ENCODE measurements at regions of chr17 and their contacts with region 1.

Region 1: GRCh38 chr17:58531661-58532554 is 17.5 kb upstream of the MTMR4 start:
- DNase-seq: no peak
- ATAC-seq: peak; percentile 77
- H3K4me3 ChIP-seq: peak overlapping the region; percentile 35 to 68 (median 48); a peak in 5 of 6 replicates
- H3K27ac ChIP-seq: no peak overlapping the region
- H3K4me1 ChIP-seq: peaks cover 65% of the 10 kb centered on the region
- H3K27me3 ChIP-seq: peaks cover 9 to 53% of the 10 kb centered on the region in 2 experiments; a peak in 3 of 5 replicates
- CTCF ChIP-seq: no peak
- EP300 ChIP-seq: no peak
- POLR2A ChIP-seq: no peak
- RAD21 ChIP-seq: no peak; the same call in 1 of the 2 replicates

Region 2: GRCh38 chr17:58402047-58402446 is 129.9 kb before region 1 on chr17:
- CTCF ChIA-PET with region 1: no interaction called
- POLR2A ChIA-PET with region 1: no interaction called
- in situ Hi-C with region 1: no loop called
- intact Hi-C with region 1: no loop called
- DNase-seq: no peak
- ATAC-seq: no peak
- H3K4me3 ChIP-seq: no peak overlapping the region
- H3K27ac ChIP-seq: peak overlapping the region; percentile 22
- H3K4me1 ChIP-seq: peaks cover 100% of the 10 kb centered on the region
- H3K27me3 ChIP-seq: no peaks in the 10 kb centered on the region
- CTCF ChIP-seq: no peak
- EP300 ChIP-seq: no peak
- POLR2A ChIP-seq: no peak
- RAD21 ChIP-seq: no peak

Region 3: GRCh38 chr17:58577642-58578091 is 45.8 kb after region 1 on chr17:
- CTCF ChIA-PET with region 1: interaction called, 3 read pairs
- POLR2A ChIA-PET with region 1: interaction called, 3 read pairs
- in situ Hi-C with region 1: no loop called
- intact Hi-C with region 1: loop called (anchors 2 kb)
- DNase-seq: peak; percentile 52
- ATAC-seq: peak; percentile 35; the same call in 2 of the 3 replicates
- H3K4me3 ChIP-seq: no peak overlapping the region
- H3K27ac ChIP-seq: no peak overlapping the region
- H3K4me1 ChIP-seq: peaks cover 39% of the 10 kb centered on the region
- H3K27me3 ChIP-seq: no peaks in the 10 kb centered on the region
- CTCF ChIP-seq: peak; percentile 60
- EP300 ChIP-seq: 0 out of 4 replicates have a peak, but pooled peaks of 1 of the 2 experiments have one; percentile 21
- POLR2A ChIP-seq: no peak
- RAD21 ChIP-seq: no peak

Region 4: DNA sequence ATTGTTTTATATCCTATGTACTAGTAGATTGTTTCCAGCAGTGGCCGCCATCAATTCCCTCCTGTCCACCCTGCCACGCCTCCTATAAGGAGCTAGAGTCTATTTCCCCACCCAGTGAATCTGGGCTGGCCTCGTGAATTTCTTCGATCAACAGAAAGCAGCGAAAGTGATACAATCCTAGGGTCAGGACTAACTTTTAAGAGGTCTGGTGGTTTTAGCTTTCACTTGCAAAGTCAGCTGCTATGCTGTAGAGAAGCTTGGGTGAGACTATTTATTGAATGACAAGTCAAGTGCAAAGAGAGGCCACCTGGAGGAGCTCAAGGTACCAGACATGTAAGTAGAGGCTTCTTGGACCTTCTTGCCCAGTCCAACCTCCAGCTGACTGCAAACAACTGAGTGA is 63.4 kb after region 1 on chr17:
- CTCF ChIA-PET with region 1: no interaction called
- POLR2A ChIA-PET with region 1: no interaction called
- in situ Hi-C with region 1: loop called (anchors 10 kb)
- intact Hi-C with region 1: no loop called
- DNase-seq: no peak
- ATAC-seq: no peak
- H3K4me3 ChIP-seq: no peak overlapping the region
- H3K27ac ChIP-seq: no peak overlapping the region
- H3K4me1 ChIP-seq: no peaks in the 10 kb centered on the region
- H3K27me3 ChIP-seq: no peaks in the 10 kb centered on the region
- CTCF ChIP-seq: no peak
- EP300 ChIP-seq: no peak
- POLR2A ChIP-seq: no peak
- RAD21 ChIP-seq: no peak

Measured in HepG2 (cell line).